Endothelial cell of umbilical vein (primary cell): ENCODE measurements at regions of chr4 and their contacts with region 1.

Region 1: GRCh38 chr4:72326692-72327632 is 242.1 kb downstream of the ADAMTS3 start:
- DNase-seq: peak; percentile 49
- H3K4me3 ChIP-seq: no peak overlapping the region
- H3K27ac ChIP-seq: no peak overlapping the region
- H3K4me1 ChIP-seq: no peaks in the 10 kb centered on the region
- H3K27me3 ChIP-seq: peaks cover 0 to 3% of the 10 kb centered on the region in 2 experiments
- CTCF ChIP-seq: peak; percentile 39 to 47
- POLR2A ChIP-seq: no peak

Region 2: DNA sequence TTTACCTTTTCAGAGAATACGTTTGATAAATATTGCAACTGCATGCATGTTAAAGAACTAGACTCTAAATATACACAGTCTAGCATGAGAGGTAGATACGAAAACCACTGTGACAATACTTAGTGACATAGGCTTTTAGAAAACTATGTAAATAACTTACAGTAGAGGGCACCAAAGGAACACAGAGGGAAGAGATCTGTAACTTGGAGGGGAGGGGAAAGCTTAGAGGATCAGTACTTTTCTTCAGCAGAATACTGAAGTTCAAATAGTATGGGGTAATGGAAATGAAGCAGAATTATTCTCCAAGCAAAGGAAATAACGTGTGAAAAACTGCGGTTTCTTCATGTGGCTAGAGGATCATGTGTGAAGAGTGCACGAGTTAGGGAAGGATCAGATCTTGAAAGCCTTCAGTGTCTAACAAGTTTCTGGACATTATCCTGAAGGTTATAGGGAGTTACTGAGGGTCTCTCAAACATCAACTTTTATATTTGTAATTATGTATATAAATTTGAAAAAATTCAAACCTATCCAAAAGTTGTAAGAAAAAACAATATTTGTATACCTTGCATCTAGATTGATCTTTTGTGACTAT is 30.9 kb before region 1 on chr4:
- CTCF ChIA-PET with region 1: interaction called, 20 read pairs
- POLR2A ChIA-PET with region 1: no interaction called
- dilution Hi-C with region 1: no loop called
- intact Hi-C with region 1: no loop called
- DNase-seq: peak; percentile 56
- H3K4me3 ChIP-seq: no peak overlapping the region
- H3K27ac ChIP-seq: no peak overlapping the region
- H3K4me1 ChIP-seq: no peaks in the 10 kb centered on the region
- H3K27me3 ChIP-seq: no peaks in the 10 kb centered on the region
- CTCF ChIP-seq: peak; percentile 34 to 44
- POLR2A ChIP-seq: no peak

Region 3: GRCh38 chr4:72340803-72341431 is 14.0 kb after region 1 on chr4:
- CTCF ChIA-PET with region 1: interaction called, 25 read pairs
- POLR2A ChIA-PET with region 1: no interaction called
- dilution Hi-C with region 1: no loop called
- intact Hi-C with region 1: no loop called
- DNase-seq: no peak
- H3K4me3 ChIP-seq: no peak overlapping the region
- H3K27ac ChIP-seq: no peak overlapping the region
- H3K4me1 ChIP-seq: no peaks in the 10 kb centered on the region
- H3K27me3 ChIP-seq: no peaks in the 10 kb centered on the region
- CTCF ChIP-seq: no peak
- POLR2A ChIP-seq: no peak

Region 4: DNA sequence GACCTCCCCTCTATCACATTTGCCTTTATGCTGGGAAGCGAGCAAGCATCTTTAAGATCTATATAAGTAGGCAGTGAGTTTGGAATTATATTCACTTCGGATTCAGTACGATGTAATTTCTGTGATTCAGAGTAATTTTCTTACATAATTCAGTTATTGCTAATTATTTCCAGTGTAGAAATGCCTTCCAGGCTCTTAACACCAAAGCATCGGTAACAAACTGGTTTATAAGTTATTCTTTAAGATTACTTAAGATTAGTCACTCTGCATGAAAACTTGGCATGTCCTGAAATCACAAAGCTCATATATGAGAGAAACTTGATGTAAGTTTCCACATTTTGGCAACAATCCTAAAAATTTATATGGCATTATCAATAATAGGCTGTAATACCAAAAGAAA is 121.3 kb after region 1 on chr4:
- CTCF ChIA-PET with region 1: interaction called, 10 read pairs
- POLR2A ChIA-PET with region 1: no interaction called
- dilution Hi-C with region 1: no loop called
- intact Hi-C with region 1: no loop called
- DNase-seq: no peak
- H3K4me3 ChIP-seq: no peak overlapping the region
- H3K27ac ChIP-seq: no peak overlapping the region
- H3K4me1 ChIP-seq: no peaks in the 10 kb centered on the region
- H3K27me3 ChIP-seq: no peaks in the 10 kb centered on the region
- CTCF ChIP-seq: no peak
- POLR2A ChIP-seq: no peak

Region 5: GRCh38 chr4:72496112-72496511 is 169.2 kb after region 1 on chr4:
- CTCF ChIA-PET with region 1: interaction called, 51 read pairs
- POLR2A ChIA-PET with region 1: no interaction called
- dilution Hi-C with region 1: no loop called
- intact Hi-C with region 1: no loop called
- DNase-seq: no peak
- H3K4me3 ChIP-seq: no peak overlapping the region
- H3K27ac ChIP-seq: no peak overlapping the region
- H3K4me1 ChIP-seq: no peaks in the 10 kb centered on the region
- H3K27me3 ChIP-seq: no peaks in the 10 kb centered on the region
- CTCF ChIP-seq: no peak
- POLR2A ChIP-seq: no peak

Region 6: DNA sequence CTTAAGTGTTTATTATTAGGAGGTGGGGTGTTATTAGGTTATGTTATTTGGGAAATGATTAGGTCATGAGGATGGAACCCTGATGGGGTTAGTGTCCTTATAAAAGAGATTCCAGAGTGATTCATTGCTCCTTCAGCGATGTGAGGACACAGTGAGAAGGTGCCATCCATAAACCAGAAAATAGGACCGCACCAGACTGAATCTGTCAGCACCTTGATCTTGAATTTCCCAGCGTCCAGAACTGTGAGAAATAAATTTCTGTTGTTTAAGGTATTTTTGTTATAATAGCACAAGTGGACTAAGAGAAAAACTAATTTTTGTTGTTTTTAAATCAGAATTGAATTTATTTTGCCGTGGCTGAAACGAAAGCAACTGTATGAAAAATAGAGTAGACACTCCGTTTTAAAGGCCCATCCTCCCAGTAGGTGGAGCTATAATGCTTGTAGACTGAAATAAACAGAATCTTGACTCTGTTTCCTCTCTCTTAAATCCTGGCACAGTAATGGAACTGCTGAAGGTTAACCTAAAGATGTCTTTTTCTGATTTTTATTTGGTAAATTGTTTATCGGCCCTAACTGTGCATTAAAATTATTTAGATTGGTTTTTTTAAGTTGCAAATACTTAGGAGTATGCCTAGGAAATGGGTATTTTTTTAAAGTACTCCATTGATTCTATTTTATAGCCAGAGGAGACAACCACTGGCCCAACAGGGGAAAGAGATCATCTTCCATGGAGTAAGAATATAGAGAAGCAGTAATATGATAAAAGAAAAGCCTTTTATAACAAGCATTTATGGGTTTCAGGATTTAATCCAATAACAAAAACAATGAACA is 375.2 kb after region 1 on chr4:
- CTCF ChIA-PET with region 1: interaction called, 3 read pairs
- POLR2A ChIA-PET with region 1: no interaction called
- dilution Hi-C with region 1: no loop called
- intact Hi-C with region 1: loop called (anchors 5 kb)
- DNase-seq: peak; percentile 69
- H3K4me3 ChIP-seq: peak overlapping the region; percentile 30 to 85 (median 73)
- H3K27ac ChIP-seq: peak overlapping the region; percentile 1
- H3K4me1 ChIP-seq: no peaks in the 10 kb centered on the region
- H3K27me3 ChIP-seq: no peaks in the 10 kb centered on the region
- CTCF ChIP-seq: peak; percentile 30 to 47
- POLR2A ChIP-seq: no peak